ENCODE measurements at regions of chr19 and their contacts with region 1.

Region 1: GRCh38 chr19:11035441-11036377 is 53.6 kb upstream of the LDLR start:
- DNase-seq: peak; percentile 84 to 86
- H3K4me3 ChIP-seq: no peak overlapping the region
- H3K4me3 Mint-ChIP-seq: no peak overlapping the region
- H3K27ac Mint-ChIP-seq: no peak overlapping the region
- H3K4me1 ChIP-seq: no peaks in the 10 kb centered on the region
- H3K4me1 Mint-ChIP-seq: no peaks in the 10 kb centered on the region
- H3K27me3 ChIP-seq: no peaks in the 10 kb centered on the region
- H3K27me3 Mint-ChIP-seq: no peaks in the 10 kb centered on the region
- CTCF ChIP-seq: peak; percentile 83 to 94

Region 2: GRCh38 chr19:11090054-11090900 is 54.6 kb after region 1 on chr19:
- CTCF ChIA-PET with region 1: interaction called, 6 read pairs
- POLR2A ChIA-PET with region 1: no interaction called
- intact Hi-C with region 1: loop called (anchors 1 kb)
- DNase-seq: peak; percentile 96 to 99
- H3K4me3 ChIP-seq: peak overlapping the region; percentile 87
- H3K4me3 Mint-ChIP-seq: peak overlapping the region; percentile 90
- H3K27ac Mint-ChIP-seq: peak overlapping the region; percentile 99
- H3K4me1 ChIP-seq: peaks cover 42% of the 10 kb centered on the region
- H3K4me1 Mint-ChIP-seq: peaks cover 9% of the 10 kb centered on the region
- H3K27me3 ChIP-seq: no peaks in the 10 kb centered on the region
- H3K27me3 Mint-ChIP-seq: no peaks in the 10 kb centered on the region
- CTCF ChIP-seq: no peak

Region 3: GRCh38 chr19:11130824-11131455 is 95.2 kb after region 1 on chr19:
- CTCF ChIA-PET with region 1: interaction called, 3 read pairs
- POLR2A ChIA-PET with region 1: no interaction called
- intact Hi-C with region 1: loop called (anchors 5 kb)
- DNase-seq: peak; percentile 85 to 88
- H3K4me3 ChIP-seq: no peak overlapping the region
- H3K4me3 Mint-ChIP-seq: no peak overlapping the region
- H3K27ac Mint-ChIP-seq: peak overlapping the region; percentile 25
- H3K4me1 ChIP-seq: peaks cover 12% of the 10 kb centered on the region
- H3K4me1 Mint-ChIP-seq: no peaks in the 10 kb centered on the region
- H3K27me3 ChIP-seq: no peaks in the 10 kb centered on the region
- H3K27me3 Mint-ChIP-seq: no peaks in the 10 kb centered on the region
- CTCF ChIP-seq: peak; percentile 78 to 80

Region 4: DNA sequence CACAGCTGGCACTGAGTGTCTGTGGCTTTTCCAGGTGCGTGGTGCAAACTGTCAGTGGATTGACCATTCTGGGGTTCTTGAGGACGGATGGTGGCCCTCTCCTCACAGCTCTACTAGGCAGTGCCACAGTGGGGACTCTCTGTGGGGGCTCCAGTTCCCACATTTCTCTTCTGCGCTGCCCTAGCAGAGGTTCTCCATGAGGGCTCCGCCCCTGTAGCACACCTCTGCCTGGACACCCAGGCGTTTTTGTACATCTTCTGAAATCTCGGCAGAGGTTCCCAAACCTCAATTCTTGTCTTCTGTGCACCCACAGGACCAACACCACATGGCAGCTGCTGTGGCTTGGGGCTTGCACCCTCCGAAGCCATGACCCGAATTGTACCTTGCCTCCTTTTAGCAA is 570.8 kb after region 1 on chr19:
- CTCF ChIA-PET with region 1: no interaction called
- POLR2A ChIA-PET with region 1: no interaction called
- intact Hi-C with region 1: no loop called
- DNase-seq: no peak
- H3K4me3 ChIP-seq: no peak overlapping the region
- H3K4me3 Mint-ChIP-seq: no peak overlapping the region
- H3K27ac Mint-ChIP-seq: no peak overlapping the region
- H3K4me1 ChIP-seq: no peaks in the 10 kb centered on the region
- H3K4me1 Mint-ChIP-seq: peaks cover 5% of the 10 kb centered on the region
- H3K27me3 ChIP-seq: no peaks in the 10 kb centered on the region
- H3K27me3 Mint-ChIP-seq: no peaks in the 10 kb centered on the region
- CTCF ChIP-seq: no peak